ENCODE measurements at regions of chr18 and their contacts with region 1.

Region 1: DNA sequence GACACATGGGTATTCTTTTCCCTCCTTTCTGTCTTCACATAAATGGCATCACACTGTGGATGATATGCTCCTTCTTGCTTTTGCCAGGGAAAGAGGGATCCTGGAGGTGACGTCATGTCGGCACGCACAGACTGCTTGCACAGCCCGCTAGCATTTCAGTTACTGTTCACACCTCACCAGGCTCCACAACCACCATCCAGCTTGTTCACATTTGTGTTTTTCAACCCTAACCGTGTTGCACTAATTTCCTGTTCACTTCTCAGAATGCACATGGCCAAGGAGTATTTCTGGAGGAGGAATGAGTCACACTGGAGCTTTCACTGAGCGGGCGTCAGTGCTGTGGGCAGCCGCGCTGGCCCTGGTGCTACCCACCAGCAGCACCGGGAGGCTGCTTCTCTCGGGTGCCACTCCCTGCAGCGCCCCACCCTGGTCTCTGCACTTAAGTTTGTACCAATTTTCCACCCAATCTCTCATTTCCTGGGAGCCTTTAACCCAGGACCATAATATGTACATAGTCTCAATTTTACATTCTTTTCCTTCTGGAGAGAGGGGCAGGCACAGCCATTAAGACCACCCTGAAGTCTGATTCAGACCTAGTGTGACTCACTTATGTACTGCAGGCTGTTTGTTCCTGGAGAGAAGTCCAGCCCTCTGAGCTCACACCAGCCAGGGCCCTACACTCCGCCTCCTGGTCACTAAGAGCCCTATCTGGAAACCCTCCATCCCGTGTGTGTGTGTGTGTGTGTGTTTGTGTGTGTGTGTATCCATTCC is 65.1 kb downstream of the MBP start:
- DNase-seq: peak; percentile 86
- ATAC-seq: peak; percentile 55
- H3K4me3 Mint-ChIP-seq: peak overlapping the region; percentile 43
- H3K27ac Mint-ChIP-seq: peak overlapping the region; percentile 92
- H3K4me1 Mint-ChIP-seq: peaks cover 98% of the 10 kb centered on the region
- H3K27me3 Mint-ChIP-seq: no peaks in the 10 kb centered on the region
- CTCF ChIP-seq: no peak

Region 2: GRCh38 chr18:76741365-76741764 is 326.1 kb before region 1 on chr18:
- CTCF ChIA-PET with region 1: no interaction called
- POLR2A ChIA-PET with region 1: no interaction called
- intact Hi-C with region 1: no loop called
- DNase-seq: no peak
- ATAC-seq: no peak
- H3K4me3 Mint-ChIP-seq: no peak overlapping the region
- H3K27ac Mint-ChIP-seq: no peak overlapping the region
- H3K4me1 Mint-ChIP-seq: peaks cover 9% of the 10 kb centered on the region
- H3K27me3 Mint-ChIP-seq: peaks cover 22% of the 10 kb centered on the region
- CTCF ChIP-seq: no peak

Region 3: DNA sequence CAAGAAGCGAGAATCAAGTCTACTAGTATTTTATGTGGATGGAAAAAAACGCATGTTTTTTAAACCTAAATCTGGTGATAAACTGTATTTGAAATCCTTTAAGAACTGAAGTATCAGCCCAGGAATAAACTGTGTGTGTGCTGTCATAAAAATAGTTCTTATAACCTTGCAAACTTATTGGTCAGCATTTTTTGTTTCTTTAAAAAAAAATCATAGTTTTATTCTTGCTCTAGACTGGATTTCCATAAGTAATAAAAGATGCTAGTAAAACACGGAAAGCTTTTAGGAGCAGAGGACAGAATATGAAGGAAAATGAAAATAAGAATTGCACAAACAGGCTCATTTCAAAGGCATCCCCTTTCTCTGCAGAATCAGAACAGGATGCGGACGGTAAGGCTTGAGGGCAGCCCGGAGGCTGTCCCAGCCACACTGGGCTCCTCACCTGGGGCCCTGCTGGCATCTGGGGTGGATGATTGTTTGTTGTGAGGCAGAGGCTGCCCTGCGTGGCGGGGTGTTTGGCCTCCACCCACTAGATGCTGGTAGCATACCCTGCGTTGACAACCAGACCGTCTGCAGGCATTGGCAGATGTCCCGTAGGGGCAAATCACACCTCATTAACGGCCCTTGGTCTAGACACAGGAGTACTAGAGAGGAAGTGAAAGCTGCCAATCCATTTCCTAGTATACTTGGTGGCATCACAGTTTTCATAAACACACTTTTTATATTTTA is 12.6 kb after region 1 on chr18:
- CTCF ChIA-PET with region 1: interaction called, 10 read pairs
- POLR2A ChIA-PET with region 1: interaction called, 3 read pairs
- intact Hi-C with region 1: no loop called
- DNase-seq: peak; percentile 29
- ATAC-seq: peak; percentile 54
- H3K4me3 Mint-ChIP-seq: no peak overlapping the region
- H3K27ac Mint-ChIP-seq: peak overlapping the region; percentile 57
- H3K4me1 Mint-ChIP-seq: peaks cover 66% of the 10 kb centered on the region
- H3K27me3 Mint-ChIP-seq: no peaks in the 10 kb centered on the region
- CTCF ChIP-seq: no peak

Region 4: GRCh38 chr18:77157312-77157711 is 89.8 kb after region 1 on chr18:
- CTCF ChIA-PET with region 1: no interaction called
- POLR2A ChIA-PET with region 1: no interaction called
- intact Hi-C with region 1: no loop called
- DNase-seq: no peak
- ATAC-seq: no peak
- H3K4me3 Mint-ChIP-seq: no peak overlapping the region
- H3K27ac Mint-ChIP-seq: no peak overlapping the region
- H3K4me1 Mint-ChIP-seq: peaks cover 8% of the 10 kb centered on the region
- H3K27me3 Mint-ChIP-seq: peaks cover 1% of the 10 kb centered on the region
- CTCF ChIP-seq: no peak